ENCODE measurements at regions of chr19 and their contacts with region 1.

Region 1: GRCh38 chr19:2648528-2648937 is 54.0 kb downstream of the GNG7 start:
- DNase-seq: peak; percentile 69 to 86 (median 86)
- ATAC-seq: peak; percentile 82 to 85
- H3K4me3 ChIP-seq: no peak overlapping the region
- H3K27ac ChIP-seq: no peak overlapping the region
- H3K4me1 ChIP-seq: no peaks in the 10 kb centered on the region
- H3K27me3 ChIP-seq: no peaks in the 10 kb centered on the region

Region 2: GRCh38 chr19:1956868-1957492 is 691.6 kb before region 1 on chr19:
- intact Hi-C with region 1: no loop called
- DNase-seq: peak; percentile 20 to 74 (median 54)
- ATAC-seq: peak; percentile 14 to 18
- H3K4me3 ChIP-seq: no peak overlapping the region
- H3K27ac ChIP-seq: no peak overlapping the region
- H3K4me1 ChIP-seq: no peaks in the 10 kb centered on the region
- H3K27me3 ChIP-seq: no peaks in the 10 kb centered on the region

Region 3: DNA sequence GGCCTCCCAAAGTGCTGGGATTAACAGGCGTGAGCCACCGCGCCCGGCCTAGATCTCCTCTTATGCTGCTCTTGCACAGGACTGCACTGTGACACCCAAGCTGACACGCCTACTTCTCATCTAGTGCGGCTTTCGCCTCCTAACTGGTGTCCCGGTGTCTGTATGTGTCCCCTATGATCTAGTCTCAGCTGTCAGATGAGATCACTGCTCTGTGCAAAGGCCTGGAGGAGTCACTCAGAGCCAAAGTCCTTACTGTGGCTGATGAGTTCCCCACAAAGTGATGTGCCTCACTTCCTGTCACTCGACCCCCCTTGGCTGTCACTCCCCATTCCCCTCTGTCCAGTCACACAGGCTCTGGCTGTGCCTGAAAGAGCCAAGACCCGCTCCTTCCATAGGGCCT is 221.1 kb after region 1 on chr19:
- intact Hi-C with region 1: loop called in 2 of 4 experiments (anchors 5 kb)
- DNase-seq: no peak
- ATAC-seq: no peak
- H3K4me3 ChIP-seq: no peak overlapping the region
- H3K27ac ChIP-seq: no peak overlapping the region
- H3K4me1 ChIP-seq: no peaks in the 10 kb centered on the region
- H3K27me3 ChIP-seq: no peaks in the 10 kb centered on the region

Measured in right cardiac atrium (tissue), 5 donors.